ENCODE measurements at regions of chr1 and their contacts with region 1.

Region 1: GRCh38 chr1:234326497-234327366 is 46.5 kb upstream of the COA6 start:
- DNase-seq: no peak
- ATAC-seq: peak; percentile 93
- H3K4me3 ChIP-seq: peak overlapping the region; percentile 23 to 44; a peak in 3 of 4 replicates
- H3K27ac ChIP-seq: no peak overlapping the region
- H3K4me1 ChIP-seq: no peaks in the 10 kb centered on the region
- H3K27me3 ChIP-seq: no peaks in the 10 kb centered on the region
- CTCF ChIP-seq: peak; percentile 95

Region 2: GRCh38 chr1:233627376-233627775 is 699.4 kb before region 1 on chr1:
- CTCF ChIA-PET with region 1: no interaction called
- POLR2A ChIA-PET with region 1: no interaction called
- in situ Hi-C with region 1: no loop called
- intact Hi-C with region 1: no loop called
- DNase-seq: no peak
- ATAC-seq: no peak
- H3K4me3 ChIP-seq: no peak overlapping the region
- H3K27ac ChIP-seq: no peak overlapping the region
- H3K4me1 ChIP-seq: no peaks in the 10 kb centered on the region
- H3K27me3 ChIP-seq: peaks cover 20% of the 10 kb centered on the region
- CTCF ChIP-seq: no peak

Region 3: DNA sequence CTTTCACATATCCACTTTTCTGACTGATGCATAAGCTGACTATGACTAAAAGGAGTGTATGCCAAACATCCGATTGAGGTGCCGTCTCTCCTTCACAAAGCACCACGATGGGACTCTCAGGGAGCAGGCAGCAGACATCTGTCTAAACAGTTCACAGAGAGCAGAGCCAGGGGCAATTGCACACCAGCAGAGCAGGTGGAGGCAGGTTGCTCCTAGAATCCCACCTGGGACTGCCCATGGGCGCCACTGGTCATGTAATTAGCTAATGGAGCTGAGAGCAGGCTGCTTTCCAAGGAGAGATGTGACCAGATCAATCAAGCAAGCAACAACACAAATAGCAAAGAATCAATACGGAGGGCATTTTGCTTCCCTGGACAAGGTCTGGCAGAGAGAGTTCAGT is 16.0 kb after region 1 on chr1:
- CTCF ChIA-PET with region 1: interaction called, 10 read pairs
- POLR2A ChIA-PET with region 1: no interaction called
- in situ Hi-C with region 1: no loop called
- intact Hi-C with region 1: no loop called
- DNase-seq: no peak
- ATAC-seq: no peak
- H3K4me3 ChIP-seq: no peak overlapping the region
- H3K27ac ChIP-seq: no peak overlapping the region
- H3K4me1 ChIP-seq: no peaks in the 10 kb centered on the region
- H3K27me3 ChIP-seq: no peaks in the 10 kb centered on the region
- CTCF ChIP-seq: no peak